CD4-positive, alpha-beta memory T cell (primary cell): ENCODE measurements at regions of chr17 and their contacts with region 1.

Region 1: DNA sequence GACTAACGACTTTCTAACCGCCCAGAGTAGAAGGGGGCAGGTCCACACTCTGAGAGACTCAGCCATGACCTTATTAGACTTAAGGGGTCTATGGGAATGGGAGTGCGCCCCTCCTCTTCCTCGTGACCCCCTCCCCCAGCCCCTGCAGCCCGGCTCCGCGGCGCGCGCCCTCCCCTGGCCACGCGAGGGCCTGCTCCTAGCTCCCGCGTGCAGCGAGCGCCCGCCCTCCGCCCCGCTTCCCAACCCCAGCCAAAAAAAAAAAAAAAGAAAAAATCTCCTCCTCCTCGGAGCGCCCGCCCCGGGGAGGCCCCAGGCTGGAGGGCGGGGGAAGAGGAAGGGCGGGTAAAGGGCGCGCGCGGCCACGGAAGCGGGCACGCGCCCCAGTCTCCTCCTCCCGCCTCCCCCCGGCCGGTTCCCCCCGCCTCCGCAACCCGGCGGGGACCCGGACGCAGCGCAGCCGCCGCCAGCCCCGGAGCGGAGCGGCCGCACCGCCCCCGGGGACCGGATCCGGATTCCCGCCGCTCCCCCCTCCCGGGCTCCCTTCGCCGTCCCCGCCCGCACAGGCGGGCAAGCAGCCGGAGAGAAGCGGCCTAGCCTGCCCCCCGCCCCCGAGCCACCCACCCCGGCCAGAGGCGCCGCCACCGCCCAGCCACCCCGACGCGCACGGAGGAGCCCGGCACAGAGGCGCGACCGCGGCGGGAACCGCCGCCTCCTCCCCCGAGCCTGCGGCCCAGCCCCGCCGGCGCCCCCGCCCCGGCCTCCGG is 949 bp downstream of the UBTF start:
- DNase-seq: peak; percentile 85 to 92 (median 90)
- H3K4me3 ChIP-seq: peak overlapping the region; percentile 37 to 50
- H3K4me3 Mint-ChIP-seq: peak overlapping the region; percentile 68 to 93 (median 83)
- H3K27ac ChIP-seq: peak overlapping the region; percentile 71
- H3K27ac Mint-ChIP-seq: peak overlapping the region; percentile 15 to 95 (median 91)
- H3K4me1 ChIP-seq: peaks cover 60% of the 10 kb centered on the region
- H3K4me1 Mint-ChIP-seq: peaks cover 39 to 68% (median 51%) of the 10 kb centered on the region in 4 donors
- H3K27me3 ChIP-seq: no peaks in the 10 kb centered on the region
- H3K27me3 Mint-ChIP-seq: no peaks in the 10 kb centered on the region

Region 2: GRCh38 chr17:44006598-44007345 is 211.8 kb before region 1 on chr17:
- CTCF ChIA-PET with region 1: no interaction called
- POLR2A ChIA-PET with region 1: no interaction called
- intact Hi-C with region 1: loop called (anchors 5 kb)
- DNase-seq: peak; percentile 88 to 98 (median 90)
- H3K4me3 ChIP-seq: peak overlapping the region; percentile 78 to 87
- H3K4me3 Mint-ChIP-seq: peak overlapping the region; percentile 82 to 92 (median 90)
- H3K27ac ChIP-seq: peak overlapping the region; percentile 41
- H3K27ac Mint-ChIP-seq: peak overlapping the region; percentile 75 to 92 (median 88)
- H3K4me1 ChIP-seq: peaks cover 39% of the 10 kb centered on the region
- H3K4me1 Mint-ChIP-seq: peaks cover 8 to 34% (median 22%) of the 10 kb centered on the region in 4 donors
- H3K27me3 ChIP-seq: no peaks in the 10 kb centered on the region
- H3K27me3 Mint-ChIP-seq: peaks cover 0 to 1% of the 10 kb centered on the region in 2 donors

Region 3: GRCh38 chr17:44170499-44171201 is 47.9 kb before region 1 on chr17 and contains the start of gene ASB16:
- CTCF ChIA-PET with region 1: no interaction called
- POLR2A ChIA-PET with region 1: no interaction called
- intact Hi-C with region 1: no loop called
- DNase-seq: no peak
- H3K4me3 ChIP-seq: no peak within 1 kb of the TSS
- H3K4me3 Mint-ChIP-seq: no peak within 1 kb of the TSS
- H3K27ac ChIP-seq: no peak within 1 kb of the TSS
- H3K27ac Mint-ChIP-seq: peak within 1 kb of the TSS in 2 of 7 donors; percentile 63 to 89
- H3K4me1 ChIP-seq: peaks cover 6% of the 10 kb centered on the region
- H3K4me1 Mint-ChIP-seq: peaks cover 5 to 16% (median 9%) of the 10 kb centered on the region in 4 donors
- H3K27me3 ChIP-seq: no peaks in the 10 kb centered on the region
- H3K27me3 Mint-ChIP-seq: no peaks in the 10 kb centered on the region
- total RNA-seq, gene ASB16: not detected

Region 4: GRCh38 chr17:44186307-44187130 is 32.0 kb before region 1 on chr17 and contains the start of gene TMUB2:
- CTCF ChIA-PET with region 1: interaction called, 5 read pairs
- POLR2A ChIA-PET with region 1: interaction called, 159 read pairs
- intact Hi-C with region 1: loop called (anchors 1 kb)
- DNase-seq: peak; percentile 99 to 100 (median 99)
- H3K4me3 ChIP-seq: peak within 1 kb of the TSS; percentile 96 to 98
- H3K4me3 Mint-ChIP-seq: peak within 1 kb of the TSS; percentile 97 to 100 (median 99)
- H3K27ac ChIP-seq: peak within 1 kb of the TSS; percentile 98
- H3K27ac Mint-ChIP-seq: peak within 1 kb of the TSS; percentile 96 to 100 (median 100)
- H3K4me1 ChIP-seq: peaks cover 44% of the 10 kb centered on the region
- H3K4me1 Mint-ChIP-seq: peaks cover 34 to 67% (median 51%) of the 10 kb centered on the region in 4 donors
- H3K27me3 ChIP-seq: no peaks in the 10 kb centered on the region
- H3K27me3 Mint-ChIP-seq: no peaks in the 10 kb centered on the region
- total RNA-seq, gene TMUB2: 45.4 to 47.9 TPM

Region 5: GRCh38 chr17:44247440-44247841 is 28.9 kb after region 1 on chr17:
- CTCF ChIA-PET with region 1: interaction called, 3 read pairs
- POLR2A ChIA-PET with region 1: interaction called, 19 read pairs
- intact Hi-C with region 1: no loop called
- DNase-seq: no peak
- H3K4me3 ChIP-seq: no peak overlapping the region
- H3K4me3 Mint-ChIP-seq: no peak overlapping the region
- H3K27ac ChIP-seq: no peak overlapping the region
- H3K27ac Mint-ChIP-seq: peak overlapping the region in 4 of 7 donors; percentile 62 to 78 (median 68)
- H3K4me1 ChIP-seq: peaks cover 41% of the 10 kb centered on the region
- H3K4me1 Mint-ChIP-seq: peaks cover 14 to 49% (median 27%) of the 10 kb centered on the region in 4 donors
- H3K27me3 ChIP-seq: no peaks in the 10 kb centered on the region
- H3K27me3 Mint-ChIP-seq: no peaks in the 10 kb centered on the region

Region 6: GRCh38 chr17:44324571-44325275 is 106.2 kb after region 1 on chr17 and contains the start of gene SLC25A39:
- CTCF ChIA-PET with region 1: interaction called, 107 read pairs
- POLR2A ChIA-PET with region 1: interaction called, 209 read pairs
- intact Hi-C with region 1: loop called (anchors 1 kb)
- DNase-seq: peak; percentile 88 to 98 (median 94)
- H3K4me3 ChIP-seq: peak within 1 kb of the TSS; percentile 47 to 76
- H3K4me3 Mint-ChIP-seq: peak within 1 kb of the TSS; percentile 91 to 96 (median 92)
- H3K27ac ChIP-seq: peak within 1 kb of the TSS; percentile 91
- H3K27ac Mint-ChIP-seq: peak within 1 kb of the TSS; percentile 97 to 99 (median 98)
- H3K4me1 ChIP-seq: peaks cover 13% of the 10 kb centered on the region
- H3K4me1 Mint-ChIP-seq: peaks cover 7 to 41% (median 23%) of the 10 kb centered on the region in 4 donors
- H3K27me3 ChIP-seq: no peaks in the 10 kb centered on the region
- H3K27me3 Mint-ChIP-seq: no peaks in the 10 kb centered on the region
- total RNA-seq, gene SLC25A39: 91.2 to 94.4 TPM

Region 7: DNA sequence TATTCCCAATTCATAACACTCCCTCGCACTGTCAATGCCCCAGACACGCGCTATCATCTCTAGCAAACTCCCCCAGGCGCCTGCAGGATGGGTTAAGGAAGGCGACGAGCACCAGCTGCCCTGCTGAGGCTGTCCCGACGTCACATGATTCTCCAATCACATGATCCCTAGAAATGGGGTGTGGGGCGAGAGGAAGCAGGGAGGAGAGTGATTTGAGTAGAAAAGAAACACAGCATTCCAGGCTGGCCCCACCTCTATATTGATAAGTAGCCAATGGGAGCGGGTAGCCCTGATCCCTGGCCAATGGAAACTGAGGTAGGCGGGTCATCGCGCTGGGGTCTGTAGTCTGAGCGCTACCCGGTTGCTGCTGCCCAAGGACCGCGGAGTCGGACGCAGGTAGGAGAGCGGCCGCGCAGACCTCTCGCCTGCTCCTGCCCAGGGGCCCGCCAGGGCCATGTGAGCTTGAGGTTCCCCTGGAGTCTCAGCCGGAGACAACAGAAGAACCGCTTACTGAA is 126.5 kb after region 1 on chr17 and contains the start of gene GRN:
- CTCF ChIA-PET with region 1: interaction called, 41 read pairs
- POLR2A ChIA-PET with region 1: interaction called, 15 read pairs
- intact Hi-C with region 1: no loop called
- DNase-seq: peak; percentile 81 to 87 (median 84)
- H3K4me3 ChIP-seq: peak within 1 kb of the TSS; percentile 90 to 97
- H3K4me3 Mint-ChIP-seq: peak within 1 kb of the TSS; percentile 90 to 97 (median 92)
- H3K27ac ChIP-seq: peak within 1 kb of the TSS; percentile 57
- H3K27ac Mint-ChIP-seq: peak within 1 kb of the TSS; percentile 69 to 88 (median 82)
- H3K4me1 ChIP-seq: peaks cover 10% of the 10 kb centered on the region
- H3K4me1 Mint-ChIP-seq: peaks cover 10 to 31% (median 19%) of the 10 kb centered on the region in 4 donors
- H3K27me3 ChIP-seq: no peaks in the 10 kb centered on the region
- H3K27me3 Mint-ChIP-seq: peaks cover 0 to 6% of the 10 kb centered on the region in 2 donors
- total RNA-seq, gene GRN: 49.5 to 50.0 TPM

Region 8: DNA sequence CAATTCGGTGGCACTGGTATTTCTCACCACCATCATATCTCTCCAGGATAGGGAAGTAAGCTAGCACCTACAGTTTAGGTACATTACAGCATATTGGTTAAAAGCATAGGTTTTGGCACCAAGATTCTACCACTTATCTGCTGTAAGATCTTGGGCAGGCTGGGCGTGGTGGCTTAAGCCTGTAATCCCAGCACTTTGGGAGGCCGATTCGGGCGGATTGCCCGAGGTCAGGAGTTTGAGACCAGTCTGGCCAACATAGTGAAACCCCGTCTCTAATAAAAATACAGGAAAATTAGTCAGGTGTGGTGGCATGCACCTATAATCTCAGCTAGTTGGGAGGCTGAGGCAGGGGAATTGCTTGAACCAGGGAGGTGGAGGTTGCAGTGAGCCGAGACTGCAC is 233.3 kb after region 1 on chr17:
- CTCF ChIA-PET with region 1: no interaction called
- POLR2A ChIA-PET with region 1: no interaction called
- intact Hi-C with region 1: no loop called
- DNase-seq: no peak
- H3K4me3 ChIP-seq: no peak overlapping the region
- H3K4me3 Mint-ChIP-seq: no peak overlapping the region
- H3K27ac ChIP-seq: no peak overlapping the region
- H3K27ac Mint-ChIP-seq: no peak overlapping the region
- H3K4me1 ChIP-seq: no peaks in the 10 kb centered on the region
- H3K4me1 Mint-ChIP-seq: peaks cover 12 to 33% (median 16%) of the 10 kb centered on the region in 4 donors
- H3K27me3 ChIP-seq: no peaks in the 10 kb centered on the region
- H3K27me3 Mint-ChIP-seq: no peaks in the 10 kb centered on the region